Activated CD4-positive, alpha-beta memory T cell treated with anti-CD3 and anti-CD28 coated beads for 36 hours (primary cell): ENCODE measurements at regions of chr18 and their contacts with region 1.

Region 1: DNA sequence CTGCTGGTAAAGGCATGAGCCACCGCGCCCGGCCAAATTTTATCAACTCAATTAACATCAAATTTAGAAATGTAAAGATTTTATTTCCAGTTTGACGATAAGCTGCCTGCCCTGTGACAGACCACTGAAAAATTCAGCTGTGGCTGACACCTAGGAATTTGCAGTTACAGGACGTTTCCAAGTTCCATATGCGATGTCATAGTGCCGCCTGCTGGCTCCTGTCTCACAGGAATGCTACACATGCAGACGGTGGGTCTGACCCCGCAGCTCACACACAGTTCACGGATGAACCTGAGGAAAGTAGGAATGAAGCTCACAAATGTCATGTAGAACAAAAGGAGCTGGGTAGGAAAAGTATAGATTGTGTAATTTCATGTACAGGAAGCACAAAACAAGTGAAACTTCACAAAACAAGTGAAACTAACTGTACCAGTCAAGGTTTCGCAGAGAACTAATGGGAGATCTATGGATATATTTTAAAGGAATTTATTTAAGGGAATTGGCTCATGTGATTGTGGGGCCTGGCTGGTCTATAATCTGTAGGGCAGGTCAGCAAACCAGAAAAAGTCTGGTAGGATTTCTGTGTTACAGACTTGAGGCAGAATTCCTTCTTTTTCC is 13.2 kb upstream of the SEH1L start:
- DNase-seq: peak; percentile 86
- H3K4me3 Mint-ChIP-seq: no peak overlapping the region
- H3K27ac Mint-ChIP-seq: no peak overlapping the region
- H3K4me1 Mint-ChIP-seq: peaks cover 4% of the 10 kb centered on the region
- H3K27me3 Mint-ChIP-seq: peaks cover 2% of the 10 kb centered on the region

Region 2: GRCh38 chr18:12391618-12392165 is 542.9 kb before region 1 on chr18:
- CTCF ChIA-PET with region 1: interaction called, 7 read pairs
- POLR2A ChIA-PET with region 1: no interaction called
- intact Hi-C with region 1: loop called (anchors 5 kb)
- DNase-seq: peak; percentile 68
- H3K4me3 Mint-ChIP-seq: no peak overlapping the region
- H3K27ac Mint-ChIP-seq: no peak overlapping the region
- H3K4me1 Mint-ChIP-seq: no peaks in the 10 kb centered on the region
- H3K27me3 Mint-ChIP-seq: no peaks in the 10 kb centered on the region

Region 3: DNA sequence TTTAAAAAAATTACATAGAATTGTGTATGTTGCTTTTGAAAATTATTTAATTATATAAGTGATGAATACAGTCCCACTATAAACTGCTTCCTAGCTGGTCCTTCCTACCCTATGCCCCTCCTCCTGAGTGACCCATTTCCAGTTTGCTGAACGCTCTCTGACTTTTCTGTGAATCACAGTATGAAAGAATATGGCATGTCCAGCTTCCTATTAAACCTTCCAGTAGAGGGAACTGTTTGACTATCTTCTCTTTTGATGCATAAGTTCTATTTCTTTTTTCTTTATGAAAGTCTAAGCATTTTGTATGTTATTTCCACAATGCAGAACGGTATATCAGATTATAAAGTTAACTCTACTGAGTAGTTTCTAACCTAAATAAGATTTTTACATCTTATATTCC is 190.5 kb before region 1 on chr18:
- CTCF ChIA-PET with region 1: interaction called, 51 read pairs
- POLR2A ChIA-PET with region 1: no interaction called
- intact Hi-C with region 1: loop called (anchors 1 kb)
- DNase-seq: no peak
- H3K4me3 Mint-ChIP-seq: no peak overlapping the region
- H3K27ac Mint-ChIP-seq: no peak overlapping the region
- H3K4me1 Mint-ChIP-seq: peaks cover 4% of the 10 kb centered on the region
- H3K27me3 Mint-ChIP-seq: no peaks in the 10 kb centered on the region

Region 4: GRCh38 chr18:12911025-12911928 is 23.3 kb before region 1 on chr18:
- CTCF ChIA-PET with region 1: interaction called, 11 read pairs
- POLR2A ChIA-PET with region 1: no interaction called
- intact Hi-C with region 1: no loop called
- DNase-seq: peak; percentile 65
- H3K4me3 Mint-ChIP-seq: peak overlapping the region; percentile 48
- H3K27ac Mint-ChIP-seq: no peak overlapping the region
- H3K4me1 Mint-ChIP-seq: peaks cover 7% of the 10 kb centered on the region
- H3K27me3 Mint-ChIP-seq: peaks cover 2% of the 10 kb centered on the region

Region 5: GRCh38 chr18:13159579-13159978 is 225.0 kb after region 1 on chr18:
- CTCF ChIA-PET with region 1: interaction called, 11 read pairs
- POLR2A ChIA-PET with region 1: no interaction called
- intact Hi-C with region 1: no loop called
- DNase-seq: no peak
- H3K4me3 Mint-ChIP-seq: no peak overlapping the region
- H3K27ac Mint-ChIP-seq: no peak overlapping the region
- H3K4me1 Mint-ChIP-seq: peaks cover 2% of the 10 kb centered on the region
- H3K27me3 Mint-ChIP-seq: peaks cover 2% of the 10 kb centered on the region